Cardiac septum (tissue), 1 donor: ENCODE measurements at regions of chr17 and their contacts with region 1.

Region 1: GRCh38 chr17:30278032-30278431 is 13.7 kb downstream of the BLMH start:
- DNase-seq: no peak

Region 2: DNA sequence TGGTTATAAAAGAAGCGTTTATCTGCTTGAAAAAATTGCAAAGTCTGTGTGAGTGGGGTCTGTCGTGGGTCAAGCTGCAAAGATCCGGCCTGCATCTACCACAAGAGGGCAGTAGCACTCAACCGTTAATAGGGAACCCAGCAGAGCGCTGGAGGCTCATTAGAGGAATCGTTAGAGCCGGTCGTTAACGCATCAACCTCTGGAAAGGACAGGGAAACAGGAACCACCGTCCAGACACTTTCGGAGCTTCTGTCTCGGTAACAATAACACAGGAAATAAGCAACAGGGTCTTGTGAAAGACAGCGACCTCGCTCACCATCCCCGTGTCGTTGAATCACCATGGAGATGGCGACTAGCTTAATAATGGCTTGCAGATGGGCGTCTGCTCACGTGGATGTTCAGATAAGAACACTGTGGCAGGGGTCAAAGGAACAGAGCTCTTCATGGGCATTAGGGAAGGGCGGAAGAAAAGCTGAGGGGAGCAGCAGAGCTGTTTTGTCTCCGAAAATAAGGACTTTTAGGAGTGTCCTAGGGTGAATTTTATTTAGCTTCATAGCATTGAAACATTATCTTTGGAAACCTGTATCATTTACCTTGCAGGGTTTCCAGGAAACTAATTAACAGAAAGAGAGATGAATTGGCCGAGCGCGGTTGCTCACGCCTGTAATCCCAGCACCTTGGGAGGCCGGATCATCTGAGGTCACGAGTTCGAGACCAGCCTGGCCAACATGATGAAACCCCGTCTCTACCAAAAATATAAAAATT is 173.3 kb before region 1 on chr17:
- intact Hi-C with region 1: loop called (anchors 2 kb)
- DNase-seq: peak; percentile 82

Region 3: DNA sequence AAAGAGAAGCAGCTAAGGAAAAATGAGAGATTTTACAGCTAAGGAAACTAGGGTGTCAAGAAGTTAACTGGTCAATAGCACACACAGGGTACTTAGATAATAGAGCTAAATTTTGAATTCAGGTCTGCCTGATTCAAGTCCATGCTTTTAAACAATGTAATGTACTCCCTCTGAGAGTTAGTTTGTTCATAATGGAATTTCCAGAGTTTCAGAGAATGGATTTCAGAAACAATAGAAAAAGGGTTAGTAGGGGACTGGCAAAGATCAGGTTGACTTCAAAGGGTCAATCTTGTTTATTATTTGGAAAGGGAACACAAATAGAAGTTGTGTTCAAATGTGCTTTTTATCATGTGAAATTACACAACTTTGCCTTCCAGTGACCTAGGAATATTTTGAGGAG is 143.5 kb before region 1 on chr17:
- intact Hi-C with region 1: loop called (anchors 5 kb)
- DNase-seq: no peak

Region 4: GRCh38 chr17:30550512-30551273 is 272.7 kb after region 1 on chr17:
- intact Hi-C with region 1: no loop called
- DNase-seq: no peak